Common myeloid progenitor, CD34-positive (primary cell): ENCODE measurements at regions of chr16 and their contacts with region 1.

Region 1: DNA sequence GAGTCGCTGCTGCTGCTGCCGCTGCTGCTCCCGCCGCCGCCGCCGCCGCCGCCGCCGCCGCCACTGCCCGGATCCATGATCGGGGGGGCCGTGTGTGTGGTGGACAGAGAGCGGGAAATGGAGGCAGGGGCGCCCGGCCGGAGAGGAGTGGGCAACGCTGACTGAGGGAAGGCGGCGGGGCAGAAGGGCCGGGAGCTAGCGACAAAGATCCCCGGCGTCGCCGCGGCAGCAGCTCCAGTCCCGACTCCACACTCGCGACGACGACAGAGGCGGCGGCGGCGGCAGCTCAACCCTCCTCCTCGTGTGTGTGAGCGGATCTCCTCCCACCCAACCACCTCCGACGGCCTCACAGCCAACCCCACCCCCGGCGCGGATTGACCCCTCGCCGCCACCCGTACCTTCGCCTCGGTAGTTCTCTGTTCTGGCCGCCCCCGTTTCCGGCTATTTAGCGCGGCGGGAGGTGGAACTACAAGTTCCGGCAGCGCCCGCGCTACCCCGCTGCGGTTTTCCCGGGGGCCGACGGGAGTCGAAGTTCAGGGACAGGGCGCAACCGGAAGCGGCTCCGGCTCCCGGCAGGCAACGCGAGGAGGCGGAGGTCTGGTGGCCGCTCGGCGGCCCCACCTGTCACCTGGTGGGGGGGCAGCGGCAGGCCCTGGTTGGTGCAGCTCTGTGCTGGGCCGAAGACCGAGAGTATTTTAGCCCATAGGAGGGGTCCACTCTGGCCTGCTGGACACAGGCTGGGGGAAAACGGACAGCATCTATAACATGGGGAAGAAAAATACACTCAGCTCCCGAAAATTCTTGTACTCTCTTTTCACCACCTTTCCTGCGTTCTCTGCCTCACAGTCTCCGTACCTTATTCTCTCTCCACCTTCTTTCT is at the start of gene GSPT1:
- DNase-seq: peak; percentile 99
- H3K4me3 ChIP-seq: peak within 1 kb of the TSS; percentile 75 to 95 (median 89)
- H3K27ac ChIP-seq: peak within 1 kb of the TSS; percentile 46 to 83
- H3K4me1 ChIP-seq: peaks cover 8 to 29% (median 25%) of the 10 kb centered on the region in 4 experiments
- H3K27me3 ChIP-seq: no peaks in the 10 kb centered on the region

Region 2: DNA sequence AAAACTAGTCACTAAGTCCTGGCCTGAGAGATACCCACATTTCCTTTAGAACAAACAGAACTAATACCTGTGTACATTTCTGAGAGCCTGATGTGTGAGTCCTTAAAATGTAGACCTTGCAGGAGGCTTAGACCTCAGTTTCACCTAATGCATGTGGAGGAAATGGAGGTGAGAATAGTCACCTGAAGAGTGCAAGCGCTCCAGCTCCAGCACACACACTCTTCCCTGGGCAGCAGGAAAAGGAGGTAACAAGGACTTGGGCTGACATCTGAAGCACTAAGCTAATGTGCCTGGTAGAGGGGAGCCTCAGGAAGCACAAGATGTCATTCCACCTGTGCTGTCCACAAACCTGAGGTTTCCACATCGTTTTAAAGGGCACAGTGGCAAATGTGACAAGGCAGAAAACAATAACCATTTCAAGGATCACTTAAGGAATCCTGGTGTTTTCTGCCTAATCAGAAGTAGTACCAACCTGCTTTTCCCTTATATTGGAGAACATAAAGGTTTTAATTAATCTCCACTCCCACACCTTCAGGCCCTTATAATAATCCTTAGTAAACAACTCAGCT is 47.4 kb before region 1 on chr16:
- CTCF ChIA-PET with region 1: no interaction called
- POLR2A ChIA-PET with region 1: interaction called, 10 read pairs
- DNase-seq: no peak
- H3K4me3 ChIP-seq: no peak overlapping the region
- H3K27ac ChIP-seq: no peak overlapping the region
- H3K4me1 ChIP-seq: peaks cover 0 to 3% (median 0%) of the 10 kb centered on the region in 4 experiments
- H3K27me3 ChIP-seq: no peaks in the 10 kb centered on the region